WTC11 (cell line): ENCODE measurements at regions of chr16 and their contacts with region 1.

Region 1: DNA sequence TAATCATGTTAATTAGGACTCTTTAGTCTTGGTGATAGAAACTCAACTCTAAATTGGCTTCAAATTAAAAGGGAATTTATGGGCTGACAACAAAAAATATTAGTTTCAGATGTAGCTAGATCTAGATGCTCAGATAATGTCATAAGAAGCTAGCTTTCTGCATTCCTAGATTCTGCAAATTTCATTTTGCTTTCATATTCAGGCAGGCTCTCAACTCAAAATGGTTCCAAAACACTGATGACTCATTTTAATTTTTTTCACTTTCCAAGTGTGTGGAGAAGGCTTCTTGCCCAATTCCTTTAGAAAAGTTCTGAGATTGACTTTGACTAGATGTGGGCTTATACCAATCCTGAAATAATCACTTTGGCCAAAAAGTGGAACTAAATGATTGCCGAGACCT is 236.7 kb upstream of the GOT2 start:
- DNase-seq: no peak
- ATAC-seq: no peak
- H3K4me3 Mint-ChIP-seq: no peak overlapping the region
- H3K27ac Mint-ChIP-seq: no peak overlapping the region
- H3K4me1 Mint-ChIP-seq: 0 out of 2 replicates have a peak, but pooled peaks cover 4% of the 10 kb centered on the region
- H3K27me3 Mint-ChIP-seq: no peaks in the 10 kb centered on the region
- CTCF ChIP-seq: no peak

Region 2: DNA sequence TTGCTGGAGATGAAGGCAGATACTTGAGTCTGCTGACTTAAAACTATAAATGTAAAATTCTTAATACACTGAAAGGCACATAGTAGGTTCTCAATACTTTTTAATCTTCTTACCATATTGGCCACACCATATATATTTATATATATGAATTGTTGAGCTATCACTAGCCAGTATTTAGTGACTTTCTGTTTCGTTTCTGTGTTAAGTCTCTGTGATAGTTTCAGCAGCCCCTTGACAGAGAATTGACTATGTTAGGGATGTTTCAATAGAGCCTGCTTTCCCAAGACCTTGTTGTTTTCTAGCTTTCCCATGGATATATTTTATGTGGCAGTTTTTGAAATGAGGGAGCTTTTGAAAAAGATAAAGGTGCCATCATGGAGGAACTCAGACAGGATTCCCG is 30.2 kb before region 1 on chr16:
- CTCF ChIA-PET with region 1: interaction called, 3 read pairs
- POLR2A ChIA-PET with region 1: interaction called, 10 read pairs
- DNase-seq: no peak
- ATAC-seq: no peak
- H3K4me3 Mint-ChIP-seq: no peak overlapping the region
- H3K27ac Mint-ChIP-seq: no peak overlapping the region
- H3K4me1 Mint-ChIP-seq: peaks cover 25% of the 10 kb centered on the region
- H3K27me3 Mint-ChIP-seq: no peaks in the 10 kb centered on the region
- CTCF ChIP-seq: no peak

Region 3: GRCh38 chr16:59181821-59182420 is 211.1 kb after region 1 on chr16:
- CTCF ChIA-PET with region 1: no interaction called
- POLR2A ChIA-PET with region 1: no interaction called
- DNase-seq: no peak
- ATAC-seq: peak; percentile 44
- H3K4me3 Mint-ChIP-seq: no peak overlapping the region
- H3K27ac Mint-ChIP-seq: no peak overlapping the region
- H3K4me1 Mint-ChIP-seq: peaks cover 7% of the 10 kb centered on the region
- H3K27me3 Mint-ChIP-seq: no peaks in the 10 kb centered on the region; the same call in 1 of the 2 replicates
- CTCF ChIP-seq: no peak